ENCODE measurements at regions of chr14 and their contacts with region 1.

Region 1: GRCh38 chr14:32076278-32077080 is 625 bp upstream of the ARHGAP5 start:
- DNase-seq: no peak
- ATAC-seq: peak; percentile 66
- H3K4me3 ChIP-seq: peak overlapping the region; percentile 83 to 96 (median 92)
- H3K4me3 Mint-ChIP-seq: peak overlapping the region; percentile 96
- H3K27ac ChIP-seq: peak overlapping the region; percentile 53 to 62
- H3K27ac Mint-ChIP-seq: peak overlapping the region; percentile 96
- H3K4me1 ChIP-seq: peaks cover 11 to 17% of the 10 kb centered on the region in 2 donors
- H3K4me1 Mint-ChIP-seq: peaks cover 34% of the 10 kb centered on the region
- H3K27me3 ChIP-seq: no peaks in the 10 kb centered on the region
- H3K27me3 Mint-ChIP-seq: no peaks in the 10 kb centered on the region
- CTCF ChIP-seq: no peak

Region 2: DNA sequence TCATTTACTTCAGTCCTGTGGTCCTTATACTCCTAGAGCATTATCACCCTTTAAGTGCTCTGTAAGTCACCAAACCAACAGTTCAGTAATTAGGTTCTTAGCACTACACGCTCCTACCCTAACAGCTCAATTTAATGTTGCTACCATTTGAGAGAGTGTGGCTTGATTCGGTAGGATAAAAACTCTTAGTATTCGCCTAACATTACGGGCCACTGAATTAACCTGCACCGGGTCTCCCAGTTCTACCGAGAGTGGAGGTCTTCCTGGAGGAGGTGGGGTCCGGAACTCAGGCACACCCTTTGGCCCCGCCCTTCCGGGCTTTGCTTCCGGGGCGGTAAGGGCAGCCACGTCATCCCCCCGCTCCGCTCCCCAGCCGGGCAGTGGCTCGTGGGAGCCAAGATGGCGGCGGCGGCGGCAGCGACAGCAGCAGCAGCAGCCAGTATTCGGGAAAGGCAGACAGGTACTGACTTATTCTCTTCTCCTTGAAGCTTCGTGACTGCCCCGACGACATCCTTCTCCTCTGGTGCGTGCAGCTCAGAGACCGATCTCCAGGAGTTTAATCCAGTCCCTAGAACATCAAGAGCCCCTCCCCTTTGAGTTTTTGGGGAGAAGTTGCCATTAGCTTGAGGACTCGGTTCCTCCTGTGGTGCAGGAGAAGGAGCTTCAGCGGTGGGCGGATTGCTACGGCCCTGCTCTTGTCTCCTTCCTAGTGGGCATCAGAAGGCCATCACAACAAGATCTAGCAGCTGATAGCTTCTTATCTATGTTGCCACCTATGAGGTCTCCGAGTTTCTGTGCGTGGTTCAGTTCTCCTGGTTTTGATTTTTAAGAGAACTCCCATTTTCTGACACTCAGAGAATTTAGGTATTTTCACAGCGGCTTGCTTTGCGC is 1454.3 kb before region 1 on chr14 and contains the start of gene SCFD1:
- CTCF ChIA-PET with region 1: no interaction called
- POLR2A ChIA-PET with region 1: no interaction called
- intact Hi-C with region 1: loop called (anchors 5 kb)
- DNase-seq: peak; percentile 94
- ATAC-seq: peak; percentile 98
- H3K4me3 ChIP-seq: peak within 1 kb of the TSS; percentile 78 to 98 (median 88)
- H3K4me3 Mint-ChIP-seq: peak within 1 kb of the TSS; percentile 98
- H3K27ac ChIP-seq: peak within 1 kb of the TSS; percentile 82 to 94
- H3K27ac Mint-ChIP-seq: peak within 1 kb of the TSS; percentile 98
- H3K4me1 ChIP-seq: peaks cover 14 to 28% of the 10 kb centered on the region in 2 donors
- H3K4me1 Mint-ChIP-seq: peaks cover 47% of the 10 kb centered on the region
- H3K27me3 ChIP-seq: no peaks in the 10 kb centered on the region
- H3K27me3 Mint-ChIP-seq: no peaks in the 10 kb centered on the region
- CTCF ChIP-seq: no peak
- total RNA-seq, gene SCFD1: 73.0 and 79.0 TPM in 2 replicates

Region 3: DNA sequence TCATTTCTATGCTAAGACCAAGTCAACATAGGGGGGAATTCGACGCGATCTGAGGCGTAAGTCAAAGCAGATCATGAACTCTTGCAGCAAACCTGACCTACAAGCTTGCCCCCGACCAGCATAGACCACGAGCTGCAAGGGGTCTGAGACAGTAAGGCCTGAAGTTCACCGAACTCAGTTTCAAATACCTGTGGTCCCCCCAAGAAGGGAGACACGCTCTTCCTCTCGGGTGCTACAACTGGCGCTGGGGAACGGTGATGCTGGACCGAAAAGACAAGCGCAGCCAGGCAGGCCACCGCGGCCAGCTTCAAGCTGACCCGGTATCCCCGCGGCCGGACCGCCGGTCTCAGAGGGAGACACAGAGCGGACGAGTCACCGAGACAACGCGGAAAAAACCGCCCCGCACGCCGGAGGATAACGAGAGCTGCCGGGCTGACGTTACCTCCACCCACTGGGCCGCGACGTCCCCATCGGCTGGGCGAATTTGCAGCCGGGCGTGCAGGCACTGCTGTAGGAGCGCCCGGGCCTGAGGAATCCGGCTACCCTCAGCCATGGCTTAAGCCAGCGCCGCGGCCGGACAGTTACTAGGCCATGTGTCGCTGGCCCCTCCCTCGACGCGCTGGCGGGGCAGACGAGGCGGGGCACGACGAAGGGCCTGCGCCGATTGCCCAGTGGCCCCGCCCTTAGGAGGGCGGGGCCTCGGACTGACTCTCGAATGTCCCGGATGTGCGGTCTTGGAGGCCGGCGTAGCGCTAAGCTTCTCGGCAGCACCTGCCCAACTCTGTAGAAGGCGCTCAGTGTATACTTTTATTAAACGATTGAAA is 619.4 kb before region 1 on chr14 and contains the start of gene DTD2:
- CTCF ChIA-PET with region 1: no interaction called
- POLR2A ChIA-PET with region 1: interaction called, 3 read pairs
- intact Hi-C with region 1: loop called (anchors 2 kb)
- DNase-seq: peak; percentile 95
- ATAC-seq: peak; percentile 99
- H3K4me3 ChIP-seq: peak within 1 kb of the TSS; percentile 63 to 87 (median 71)
- H3K4me3 Mint-ChIP-seq: peak within 1 kb of the TSS; percentile 98
- H3K27ac ChIP-seq: peak within 1 kb of the TSS; percentile 72 to 82
- H3K27ac Mint-ChIP-seq: peak within 1 kb of the TSS; percentile 93
- H3K4me1 ChIP-seq: peaks cover 8 to 13% of the 10 kb centered on the region in 2 donors
- H3K4me1 Mint-ChIP-seq: peaks cover 32% of the 10 kb centered on the region
- H3K27me3 ChIP-seq: no peaks in the 10 kb centered on the region
- H3K27me3 Mint-ChIP-seq: no peaks in the 10 kb centered on the region
- CTCF ChIP-seq: no peak
- total RNA-seq, gene DTD2: 12.5 and 14.1 TPM in 2 replicates

Region 4: DNA sequence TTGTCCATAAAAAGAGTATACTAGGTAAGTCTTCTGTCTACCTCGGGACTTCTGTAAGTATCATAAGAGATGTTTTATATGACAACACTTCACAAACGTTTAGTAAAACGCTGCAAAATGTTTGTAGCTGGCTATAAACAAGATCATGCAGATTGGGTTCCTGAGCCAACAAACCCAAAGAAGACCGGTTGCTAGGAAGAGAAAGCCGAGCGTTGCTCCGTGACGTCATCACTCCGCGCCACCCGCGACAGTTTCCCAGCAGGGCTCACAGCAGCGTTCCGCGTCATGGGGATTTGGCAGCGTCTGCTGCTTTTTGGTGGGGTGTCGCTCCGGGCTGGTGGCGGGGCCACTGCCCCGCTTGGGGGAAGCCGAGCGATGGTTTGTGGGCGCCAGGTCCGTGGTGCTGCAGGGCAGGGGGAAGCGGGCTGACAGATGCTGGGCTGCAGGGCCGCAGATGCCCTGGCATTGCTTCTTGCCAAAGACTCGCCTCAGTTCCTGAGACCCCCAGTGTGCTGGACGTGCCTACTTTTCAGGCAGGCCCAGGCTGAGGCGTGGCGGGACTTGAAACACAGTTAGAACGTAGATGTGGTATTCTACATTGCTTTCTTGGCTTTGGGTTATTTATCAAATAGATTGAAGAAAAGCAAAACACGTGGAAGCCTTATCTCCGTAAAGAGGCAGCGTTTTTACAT is 515.2 kb before region 1 on chr14 and contains the start of gene NUBPL:
- CTCF ChIA-PET with region 1: interaction called, 3 read pairs
- POLR2A ChIA-PET with region 1: no interaction called
- intact Hi-C with region 1: loop called (anchors 2 kb)
- DNase-seq: peak; percentile 98
- ATAC-seq: peak; percentile 96
- H3K4me3 ChIP-seq: peak within 1 kb of the TSS; percentile 67 to 92 (median 84)
- H3K4me3 Mint-ChIP-seq: peak within 1 kb of the TSS; percentile 93
- H3K27ac ChIP-seq: peak within 1 kb of the TSS; percentile 62 to 94
- H3K27ac Mint-ChIP-seq: peak within 1 kb of the TSS; percentile 97
- H3K4me1 ChIP-seq: peaks cover 16 to 17% of the 10 kb centered on the region in 2 donors
- H3K4me1 Mint-ChIP-seq: peaks cover 25% of the 10 kb centered on the region
- H3K27me3 ChIP-seq: peaks cover 0 to 8% (median 3%) of the 10 kb centered on the region in 4 experiments
- H3K27me3 Mint-ChIP-seq: peaks cover 7% of the 10 kb centered on the region
- CTCF ChIP-seq: no peak
- total RNA-seq, gene NUBPL: 14.2 and 15.5 TPM in 2 replicates

Region 5: DNA sequence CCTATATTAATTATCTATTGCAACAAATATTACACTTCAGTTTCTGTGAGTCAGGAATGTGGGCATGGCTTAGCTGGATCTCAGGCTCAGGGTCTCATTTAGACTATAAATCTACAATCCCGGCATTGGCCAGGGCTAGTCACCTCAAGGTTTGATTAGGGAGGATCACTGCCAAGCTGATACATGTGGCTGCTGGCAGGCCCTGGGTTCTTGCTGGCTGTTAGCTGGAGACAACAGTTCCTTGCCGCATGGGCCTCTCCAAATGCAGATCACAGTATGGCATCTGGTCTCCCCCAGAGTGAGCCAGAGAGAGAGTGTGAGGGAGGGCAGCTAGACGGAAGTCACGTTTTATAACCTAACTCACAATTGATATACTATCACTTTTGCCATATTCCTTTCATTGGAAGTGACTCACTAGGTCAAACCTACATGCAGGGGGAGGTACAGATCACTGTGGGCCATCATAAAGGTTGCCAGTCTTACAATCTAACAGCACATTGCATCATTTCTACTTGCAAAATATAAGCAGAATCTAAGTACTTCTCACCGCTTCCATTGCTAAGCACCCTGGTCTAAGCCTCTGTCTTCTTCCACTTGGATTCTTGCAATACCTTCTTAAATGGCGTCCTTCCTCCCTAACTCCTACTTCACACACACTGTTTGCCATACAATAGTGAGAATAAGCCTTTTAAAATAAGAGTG is 173.4 kb before region 1 on chr14:
- CTCF ChIA-PET with region 1: no interaction called
- POLR2A ChIA-PET with region 1: no interaction called
- intact Hi-C with region 1: no loop called
- DNase-seq: no peak
- ATAC-seq: no peak
- H3K4me3 ChIP-seq: no peak overlapping the region
- H3K4me3 Mint-ChIP-seq: no peak overlapping the region
- H3K27ac ChIP-seq: no peak overlapping the region
- H3K27ac Mint-ChIP-seq: no peak overlapping the region
- H3K4me1 ChIP-seq: peaks cover 13 to 14% of the 10 kb centered on the region in 2 donors
- H3K4me1 Mint-ChIP-seq: peaks cover 11% of the 10 kb centered on the region
- H3K27me3 ChIP-seq: no peaks in the 10 kb centered on the region
- H3K27me3 Mint-ChIP-seq: no peaks in the 10 kb centered on the region
- CTCF ChIP-seq: no peak

Region 6: DNA sequence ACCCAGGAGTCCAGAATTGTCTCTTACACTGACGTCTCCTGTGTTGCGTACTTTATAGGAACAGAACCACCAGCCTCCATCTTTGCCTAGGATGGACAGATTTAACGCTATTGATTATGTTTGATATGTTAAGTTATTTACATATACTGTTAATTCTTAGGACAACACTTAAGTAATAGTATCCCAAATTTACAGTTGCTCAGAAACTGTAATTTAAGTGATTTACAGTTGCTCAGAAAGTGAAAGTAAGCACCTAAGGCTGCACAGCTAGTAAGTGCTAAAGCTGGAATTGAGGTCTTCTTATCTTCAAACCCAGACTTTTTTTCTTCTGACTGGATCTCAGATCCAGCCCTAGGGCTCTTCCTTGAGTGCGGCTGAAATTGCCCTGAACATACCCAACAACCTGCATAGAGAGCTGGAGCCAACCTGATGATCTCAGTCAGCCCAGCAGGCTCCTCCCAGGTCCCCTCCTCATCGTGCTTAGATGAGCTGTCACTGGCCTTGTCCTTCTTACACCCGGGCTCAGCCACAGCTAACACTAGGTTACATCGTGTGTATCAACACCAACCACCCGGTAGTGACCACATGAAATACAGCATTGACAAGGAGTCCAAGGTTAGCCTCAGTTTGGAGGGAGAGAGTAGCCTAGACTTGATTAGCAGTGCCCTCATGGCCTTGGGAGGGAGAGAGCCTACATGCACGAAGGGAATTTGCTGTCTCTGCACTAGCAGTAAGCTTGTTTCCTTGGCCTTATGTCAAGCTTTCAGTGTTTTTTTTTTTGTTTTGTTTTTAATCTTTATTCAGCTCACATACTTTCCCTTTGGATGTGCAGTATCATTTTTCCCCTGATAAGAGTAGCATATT is 110.5 kb before region 1 on chr14:
- CTCF ChIA-PET with region 1: no interaction called
- POLR2A ChIA-PET with region 1: no interaction called
- intact Hi-C with region 1: no loop called
- DNase-seq: no peak
- ATAC-seq: no peak
- H3K4me3 ChIP-seq: no peak overlapping the region
- H3K4me3 Mint-ChIP-seq: no peak overlapping the region
- H3K27ac ChIP-seq: no peak overlapping the region
- H3K27ac Mint-ChIP-seq: no peak overlapping the region
- H3K4me1 ChIP-seq: peaks cover 5 to 9% of the 10 kb centered on the region in 2 donors
- H3K4me1 Mint-ChIP-seq: peaks cover 5% of the 10 kb centered on the region
- H3K27me3 ChIP-seq: no peaks in the 10 kb centered on the region
- H3K27me3 Mint-ChIP-seq: peaks cover 4% of the 10 kb centered on the region
- CTCF ChIP-seq: no peak

Region 7: DNA sequence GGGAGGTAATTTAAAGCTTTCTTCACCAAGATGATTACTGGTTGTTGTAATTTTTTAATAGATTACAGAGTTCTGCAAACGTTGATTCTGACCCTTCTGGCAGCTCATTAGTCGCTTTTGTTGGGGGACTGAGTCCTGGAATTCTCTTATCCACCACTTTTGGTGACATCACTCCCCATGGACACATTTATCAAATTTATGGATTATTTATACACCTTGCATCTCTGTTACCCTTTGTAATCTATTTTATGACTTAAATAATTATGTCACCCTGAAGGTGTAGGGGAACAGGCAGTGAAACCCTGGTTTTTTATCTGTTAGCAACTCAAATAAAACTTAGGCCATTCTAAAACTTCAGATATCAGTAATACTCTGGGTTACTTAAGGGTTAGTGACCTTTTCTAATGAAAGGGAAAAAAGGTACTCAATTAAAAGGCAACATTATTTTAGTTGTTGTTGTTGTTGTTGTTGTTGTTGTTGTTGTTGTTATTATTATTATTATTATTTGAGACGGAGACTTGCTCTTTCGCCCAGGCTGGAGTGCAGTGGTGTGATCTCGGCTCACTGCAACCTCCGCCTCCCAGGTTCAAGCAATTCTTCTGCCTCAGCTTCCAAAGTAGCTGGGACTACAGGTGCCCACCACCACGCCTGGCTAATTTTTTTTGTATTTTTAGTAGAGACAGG is 66.4 kb after region 1 on chr14:
- CTCF ChIA-PET with region 1: no interaction called
- POLR2A ChIA-PET with region 1: no interaction called
- intact Hi-C with region 1: no loop called
- DNase-seq: no peak
- ATAC-seq: no peak
- H3K4me3 ChIP-seq: no peak overlapping the region
- H3K4me3 Mint-ChIP-seq: no peak overlapping the region
- H3K27ac ChIP-seq: no peak overlapping the region
- H3K27ac Mint-ChIP-seq: no peak overlapping the region
- H3K4me1 ChIP-seq: no peaks in the 10 kb centered on the region
- H3K4me1 Mint-ChIP-seq: no peaks in the 10 kb centered on the region
- H3K27me3 ChIP-seq: no peaks in the 10 kb centered on the region
- H3K27me3 Mint-ChIP-seq: no peaks in the 10 kb centered on the region
- CTCF ChIP-seq: no peak

Region 8: GRCh38 chr14:32197922-32198321 is 121.4 kb after region 1 on chr14:
- CTCF ChIA-PET with region 1: interaction called, 22 read pairs
- POLR2A ChIA-PET with region 1: interaction called, 33 read pairs
- intact Hi-C with region 1: loop called (anchors 1 kb)
- DNase-seq: no peak
- ATAC-seq: no peak
- H3K4me3 ChIP-seq: no peak overlapping the region
- H3K4me3 Mint-ChIP-seq: no peak overlapping the region
- H3K27ac ChIP-seq: no peak overlapping the region
- H3K27ac Mint-ChIP-seq: no peak overlapping the region
- H3K4me1 ChIP-seq: peaks cover 17 to 20% of the 10 kb centered on the region in 2 donors
- H3K4me1 Mint-ChIP-seq: peaks cover 29% of the 10 kb centered on the region
- H3K27me3 ChIP-seq: no peaks in the 10 kb centered on the region
- H3K27me3 Mint-ChIP-seq: peaks cover 10% of the 10 kb centered on the region
- CTCF ChIP-seq: no peak

Region 9: DNA sequence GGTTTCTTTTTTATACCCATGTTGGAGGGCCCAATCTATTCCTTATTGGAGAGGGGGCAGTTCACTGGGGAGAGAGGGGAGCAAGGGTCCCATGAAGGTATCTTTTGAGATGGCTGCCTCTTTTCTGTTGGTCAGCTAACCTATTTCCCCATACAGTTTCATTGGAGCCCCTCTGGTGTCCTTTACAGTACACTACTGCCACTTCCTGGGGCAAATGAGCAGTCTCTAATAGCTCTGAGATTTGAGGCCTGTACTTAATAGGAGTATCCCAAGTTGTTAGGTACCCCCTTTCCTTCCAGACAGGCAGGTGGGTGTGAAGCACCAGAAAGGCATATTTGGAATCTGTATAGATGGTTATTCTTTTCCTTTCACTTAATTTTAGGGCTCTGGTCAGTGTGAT is 167.9 kb after region 1 on chr14:
- CTCF ChIA-PET with region 1: interaction called, 303 read pairs
- POLR2A ChIA-PET with region 1: no interaction called
- intact Hi-C with region 1: no loop called
- DNase-seq: no peak
- ATAC-seq: no peak
- H3K4me3 ChIP-seq: no peak overlapping the region
- H3K4me3 Mint-ChIP-seq: no peak overlapping the region
- H3K27ac ChIP-seq: no peak overlapping the region
- H3K27ac Mint-ChIP-seq: no peak overlapping the region
- H3K4me1 ChIP-seq: no peaks in the 10 kb centered on the region
- H3K4me1 Mint-ChIP-seq: no peaks in the 10 kb centered on the region
- H3K27me3 ChIP-seq: no peaks in the 10 kb centered on the region
- H3K27me3 Mint-ChIP-seq: peaks cover 12% of the 10 kb centered on the region
- CTCF ChIP-seq: no peak